Mammary epithelial cell (primary cell): ENCODE measurements at regions of chr5 and their contacts with region 1.

Region 1: GRCh38 chr5:172188033-172188892 is at the start of gene STK10:
- DNase-seq: peak; percentile 90
- H3K4me3 ChIP-seq: peak within 1 kb of the TSS; percentile 89 to 99 (median 97)
- H3K27ac ChIP-seq: peak within 1 kb of the TSS; percentile 90
- H3K4me1 ChIP-seq: peaks cover 12% of the 10 kb centered on the region
- H3K27me3 ChIP-seq: no peaks in the 10 kb centered on the region
- CTCF ChIP-seq: peak; percentile 82 to 95
- total RNA-seq, gene STK10: 50.8 to 65.0 TPM

Region 2: GRCh38 chr5:171907725-171908343 is 280.4 kb before region 1 on chr5:
- CTCF ChIA-PET with region 1: interaction called, 3 read pairs
- dilution Hi-C with region 1: no loop called
- in situ Hi-C with region 1: loop called in 1 of 2 experiments (anchors 25 kb)
- intact Hi-C with region 1: loop called (anchors 1 kb)
- DNase-seq: peak; percentile 48
- H3K4me3 ChIP-seq: no peak overlapping the region
- H3K27ac ChIP-seq: no peak overlapping the region
- H3K4me1 ChIP-seq: no peaks in the 10 kb centered on the region
- H3K27me3 ChIP-seq: no peaks in the 10 kb centered on the region
- CTCF ChIP-seq: peak; percentile 68 to 83

Region 3: GRCh38 chr5:172015346-172015745 is 172.9 kb before region 1 on chr5:
- CTCF ChIA-PET with region 1: no interaction called
- dilution Hi-C with region 1: no loop called
- in situ Hi-C with region 1: no loop called
- intact Hi-C with region 1: loop called (anchors 1 kb)
- DNase-seq: no peak
- H3K4me3 ChIP-seq: no peak overlapping the region
- H3K27ac ChIP-seq: no peak overlapping the region
- H3K4me1 ChIP-seq: peaks cover under 1% of the 10 kb centered on the region
- H3K27me3 ChIP-seq: no peaks in the 10 kb centered on the region
- CTCF ChIP-seq: no peak

Region 4: GRCh38 chr5:172106511-172107356 is 81.5 kb before region 1 on chr5:
- CTCF ChIA-PET with region 1: interaction called, 7 read pairs
- dilution Hi-C with region 1: no loop called
- in situ Hi-C with region 1: loop called (anchors 5 kb)
- intact Hi-C with region 1: loop called (anchors 1 kb)
- DNase-seq: no peak
- H3K4me3 ChIP-seq: no peak overlapping the region
- H3K27ac ChIP-seq: peak overlapping the region; percentile 29
- H3K4me1 ChIP-seq: peaks cover 75% of the 10 kb centered on the region
- H3K27me3 ChIP-seq: no peaks in the 10 kb centered on the region
- CTCF ChIP-seq: peak; percentile 63 to 96

Region 5: DNA sequence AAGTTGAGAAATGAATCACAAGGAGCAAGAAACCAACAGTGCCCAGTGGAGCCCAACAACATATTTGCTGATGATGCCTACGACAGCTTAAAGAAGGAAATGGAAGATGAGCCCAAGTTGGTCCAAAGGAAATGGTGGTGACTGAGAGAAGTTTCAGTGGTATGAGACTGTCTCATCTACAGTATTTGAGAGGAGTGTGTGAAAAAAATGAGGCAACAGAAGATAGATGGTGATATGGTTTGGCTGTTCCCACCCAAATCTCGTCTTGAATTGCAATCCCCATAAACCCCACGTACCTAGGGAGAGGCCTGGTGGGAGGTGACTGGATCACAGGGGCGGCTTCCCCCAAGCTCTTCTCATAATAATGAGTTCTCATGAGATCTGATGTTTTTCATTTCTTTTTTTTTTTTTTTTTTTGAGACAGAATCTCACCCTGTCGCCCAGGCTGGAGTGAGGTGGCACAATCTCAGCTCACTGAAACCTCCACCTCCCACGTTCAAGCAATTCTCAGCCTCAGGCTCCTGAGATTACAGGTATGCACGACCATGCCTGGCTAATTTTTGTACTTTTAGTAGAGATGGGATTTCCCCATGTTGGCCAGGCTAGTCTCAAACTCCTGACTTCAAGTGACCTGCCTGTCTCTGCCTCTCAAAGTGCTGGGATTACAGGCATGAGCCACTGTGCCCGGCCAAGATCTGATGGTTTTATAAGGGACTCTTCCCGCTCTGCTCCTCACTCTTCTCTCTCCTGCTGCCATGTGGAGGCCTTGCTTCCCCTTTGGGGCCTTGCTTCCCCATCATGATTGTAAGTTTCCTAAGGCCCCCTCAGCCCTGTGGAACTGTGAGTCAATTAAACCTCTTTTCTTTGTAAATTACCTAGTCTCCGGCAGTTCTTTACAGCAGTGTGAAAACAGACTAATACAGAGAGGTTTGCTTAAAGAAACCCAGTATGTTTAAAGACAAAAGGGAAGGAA is 35.9 kb after region 1 on chr5:
- CTCF ChIA-PET with region 1: no interaction called
- dilution Hi-C with region 1: no loop called
- in situ Hi-C with region 1: no loop called
- intact Hi-C with region 1: loop called (anchors 1 kb)
- DNase-seq: no peak
- H3K4me3 ChIP-seq: no peak overlapping the region
- H3K27ac ChIP-seq: no peak overlapping the region
- H3K4me1 ChIP-seq: no peaks in the 10 kb centered on the region
- H3K27me3 ChIP-seq: no peaks in the 10 kb centered on the region
- CTCF ChIP-seq: no peak

Region 6: GRCh38 chr5:172293054-172293744 is 104.9 kb after region 1 on chr5:
- CTCF ChIA-PET with region 1: no interaction called
- dilution Hi-C with region 1: no loop called
- in situ Hi-C with region 1: no loop called
- intact Hi-C with region 1: loop called (anchors 1 kb)
- DNase-seq: peak; percentile 58
- H3K4me3 ChIP-seq: no peak overlapping the region
- H3K27ac ChIP-seq: no peak overlapping the region
- H3K4me1 ChIP-seq: no peaks in the 10 kb centered on the region
- H3K27me3 ChIP-seq: no peaks in the 10 kb centered on the region
- CTCF ChIP-seq: peak; percentile 91 to 94

Region 7: DNA sequence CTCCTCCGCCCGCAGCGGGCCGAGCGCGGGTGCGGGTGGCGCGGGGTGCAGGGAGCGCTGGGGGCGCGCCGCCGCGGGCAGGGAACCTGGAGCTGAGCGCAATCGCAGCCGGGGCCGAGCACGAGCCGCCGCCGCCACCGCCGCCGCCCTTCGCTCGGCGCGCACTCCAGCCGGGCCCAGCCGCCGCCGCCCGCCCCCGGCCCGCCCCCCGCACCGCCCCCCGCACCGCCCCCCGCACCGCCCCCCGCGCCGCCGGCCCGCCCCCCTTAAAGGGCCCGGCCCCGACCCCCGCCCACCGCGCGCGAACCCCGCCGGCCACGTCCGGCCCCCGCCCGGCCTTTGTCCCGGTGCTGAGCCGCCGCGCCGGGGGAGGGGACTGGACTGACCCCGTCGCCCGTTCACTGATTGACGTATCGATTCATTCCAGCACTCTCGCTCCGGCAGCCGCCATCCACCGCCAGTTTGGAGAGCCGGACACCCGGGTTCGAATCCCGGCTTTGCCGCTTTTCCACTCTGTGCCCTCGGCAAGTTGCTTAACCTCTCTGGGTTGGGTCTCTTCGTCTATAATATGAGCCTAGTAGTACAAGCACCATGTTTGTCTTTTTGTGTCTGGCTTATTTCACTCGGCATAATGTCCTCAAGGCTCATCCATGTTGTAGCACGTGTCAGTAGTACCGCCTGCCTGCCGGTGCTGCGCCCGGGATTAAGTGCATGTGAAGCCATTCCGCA is 266.3 kb after region 1 on chr5 and contains the start of gene SH3PXD2B:
- CTCF ChIA-PET with region 1: interaction called, 3 read pairs
- dilution Hi-C with region 1: no loop called
- in situ Hi-C with region 1: no loop called
- intact Hi-C with region 1: loop called (anchors 5 kb)
- DNase-seq: peak; percentile 40
- H3K4me3 ChIP-seq: peak within 1 kb of the TSS; percentile 68 to 83 (median 76)
- H3K27ac ChIP-seq: peak within 1 kb of the TSS; percentile 62
- H3K4me1 ChIP-seq: peaks cover 21% of the 10 kb centered on the region
- H3K27me3 ChIP-seq: no peaks in the 10 kb centered on the region
- CTCF ChIP-seq: no peak
- total RNA-seq, gene SH3PXD2B: 19.2 to 25.1 TPM